ENCODE measurements at regions of chr20 and their contacts with region 1.

Region 1: GRCh38 chr20:32333988-32334885 is 23.9 kb upstream of the ASXL1 start:
- DNase-seq: no peak
- H3K4me3 Mint-ChIP-seq: peak overlapping the region; percentile 26
- H3K27ac Mint-ChIP-seq: peak overlapping the region; percentile 81
- H3K4me1 Mint-ChIP-seq: peaks cover 46% of the 10 kb centered on the region
- H3K27me3 Mint-ChIP-seq: no peaks in the 10 kb centered on the region

Region 2: DNA sequence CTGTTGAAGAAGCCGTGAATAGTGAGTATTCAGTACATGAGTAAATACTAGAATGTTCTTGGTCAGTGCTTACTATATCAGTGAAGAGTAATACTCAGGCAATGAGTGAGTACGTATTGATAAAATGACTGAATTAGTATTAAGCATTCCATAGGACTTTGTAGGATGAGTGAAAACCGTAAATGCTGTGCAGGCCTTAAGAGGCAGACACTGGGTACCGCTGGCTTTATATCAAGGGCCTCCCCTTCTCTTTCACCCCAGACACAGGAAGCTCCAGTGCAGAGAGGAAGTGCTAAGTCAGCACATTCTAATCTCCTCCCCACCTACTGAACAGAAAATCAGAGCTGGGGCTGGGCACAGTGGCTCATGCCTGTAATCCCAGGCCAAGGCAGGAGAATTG is 102.4 kb before region 1 on chr20:
- intact Hi-C with region 1: loop called (anchors 1 kb)
- DNase-seq: peak; percentile 20
- H3K4me3 Mint-ChIP-seq: peak overlapping the region; percentile 69
- H3K27ac Mint-ChIP-seq: peak overlapping the region; percentile 97
- H3K4me1 Mint-ChIP-seq: peaks cover 38% of the 10 kb centered on the region
- H3K27me3 Mint-ChIP-seq: no peaks in the 10 kb centered on the region

Region 3: GRCh38 chr20:32249030-32249738 is 85.1 kb before region 1 on chr20:
- intact Hi-C with region 1: loop called (anchors 1 kb)
- DNase-seq: peak; percentile 46
- H3K4me3 Mint-ChIP-seq: no peak overlapping the region
- H3K27ac Mint-ChIP-seq: peak overlapping the region; percentile 96
- H3K4me1 Mint-ChIP-seq: peaks cover 50% of the 10 kb centered on the region
- H3K27me3 Mint-ChIP-seq: no peaks in the 10 kb centered on the region

Region 4: DNA sequence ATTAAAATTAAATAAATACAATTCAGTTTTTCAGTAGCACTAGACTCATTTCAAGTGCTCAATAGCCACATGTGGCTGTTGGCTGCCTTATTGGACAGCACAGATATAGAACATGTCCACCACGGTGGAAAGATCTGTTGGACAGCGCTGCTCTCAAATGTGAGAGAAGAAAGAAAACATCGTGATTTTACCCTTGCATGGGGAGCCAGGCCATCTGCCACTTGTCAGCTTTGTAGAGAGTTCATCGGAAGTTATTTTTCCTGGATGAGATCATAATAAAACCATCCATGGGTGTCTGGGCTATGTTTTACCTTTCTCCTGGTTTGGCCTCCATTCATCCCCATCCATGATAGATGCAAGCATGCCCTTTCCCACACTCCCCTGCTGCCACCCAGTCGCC is 62.6 kb before region 1 on chr20:
- intact Hi-C with region 1: no loop called
- DNase-seq: no peak
- H3K4me3 Mint-ChIP-seq: no peak overlapping the region
- H3K27ac Mint-ChIP-seq: no peak overlapping the region
- H3K4me1 Mint-ChIP-seq: peaks cover 4% of the 10 kb centered on the region
- H3K27me3 Mint-ChIP-seq: peaks cover 1% of the 10 kb centered on the region

Region 5: GRCh38 chr20:32285621-32286371 is 48.4 kb before region 1 on chr20:
- intact Hi-C with region 1: loop called (anchors 1 kb)
- DNase-seq: peak; percentile 47
- H3K4me3 Mint-ChIP-seq: peak overlapping the region; percentile 60
- H3K27ac Mint-ChIP-seq: peak overlapping the region; percentile 84
- H3K4me1 Mint-ChIP-seq: peaks cover 60% of the 10 kb centered on the region
- H3K27me3 Mint-ChIP-seq: no peaks in the 10 kb centered on the region

Region 6: GRCh38 chr20:32344835-32345506 is 10.7 kb after region 1 on chr20:
- intact Hi-C with region 1: no loop called
- DNase-seq: no peak
- H3K4me3 Mint-ChIP-seq: no peak overlapping the region
- H3K27ac Mint-ChIP-seq: no peak overlapping the region
- H3K4me1 Mint-ChIP-seq: peaks cover 5% of the 10 kb centered on the region
- H3K27me3 Mint-ChIP-seq: no peaks in the 10 kb centered on the region

Region 7: DNA sequence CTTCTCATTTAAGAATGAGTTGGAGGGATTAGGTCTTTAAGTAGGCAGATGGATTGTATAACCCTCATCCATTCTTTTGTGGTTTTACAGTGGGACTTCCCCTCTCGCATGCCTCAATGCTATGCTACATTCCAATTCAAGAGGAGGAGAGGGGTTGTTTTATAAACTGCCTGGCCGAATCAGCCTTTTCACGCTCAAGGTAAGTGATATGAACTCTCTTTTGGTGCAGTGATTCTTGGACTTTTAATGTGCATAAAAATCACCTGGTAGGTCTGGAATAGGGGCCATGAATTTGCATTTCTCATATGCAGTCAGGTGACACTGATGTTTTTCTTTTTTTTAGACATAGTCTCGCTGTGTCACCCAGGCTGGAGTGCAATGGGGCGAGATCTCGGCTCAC is 34.7 kb after region 1 on chr20:
- intact Hi-C with region 1: loop called (anchors 5 kb)
- DNase-seq: no peak
- H3K4me3 Mint-ChIP-seq: no peak overlapping the region
- H3K27ac Mint-ChIP-seq: no peak overlapping the region
- H3K4me1 Mint-ChIP-seq: peaks cover 44% of the 10 kb centered on the region
- H3K27me3 Mint-ChIP-seq: no peaks in the 10 kb centered on the region

Region 8: DNA sequence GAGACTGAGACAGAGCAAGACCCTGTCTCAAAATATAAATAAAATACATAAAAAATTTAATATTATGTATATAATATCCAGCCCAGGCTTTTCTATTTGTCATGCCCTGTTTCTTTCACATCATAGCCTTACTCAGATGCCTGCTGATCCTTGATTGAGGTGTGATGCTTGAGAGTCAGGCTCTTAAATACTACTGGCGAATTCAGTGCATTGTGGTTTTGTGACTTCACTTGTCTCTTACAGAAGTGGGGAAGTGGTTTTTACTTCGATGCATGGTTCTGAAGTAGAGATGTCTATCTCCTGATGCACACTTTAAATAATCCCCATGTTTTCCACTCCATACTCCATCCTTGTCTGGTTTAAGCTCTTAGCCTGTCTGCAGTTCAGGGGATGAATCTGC is 53.0 kb after region 1 on chr20:
- intact Hi-C with region 1: loop called (anchors 2 kb)
- DNase-seq: peak; percentile 49
- H3K4me3 Mint-ChIP-seq: peak overlapping the region; percentile 38
- H3K27ac Mint-ChIP-seq: peak overlapping the region; percentile 57
- H3K4me1 Mint-ChIP-seq: peaks cover 46% of the 10 kb centered on the region
- H3K27me3 Mint-ChIP-seq: no peaks in the 10 kb centered on the region

Measured in activated T-helper 2 cell treated with anti-CD3 and anti-CD28 coated beads, Interferon-gamma antibody, Interleukin-2, Interleukin-4, amounts not matched to agents 10 μg/mL and 5 μg/mL and 100 μg/mL, durations not matched to agents 14 hours and 24 hours and 36 hours (primary cell).